Right ventricle myocardium inferior (tissue), 1 donor: ENCODE measurements at regions of chr7 and their contacts with region 1.

Region 1: DNA sequence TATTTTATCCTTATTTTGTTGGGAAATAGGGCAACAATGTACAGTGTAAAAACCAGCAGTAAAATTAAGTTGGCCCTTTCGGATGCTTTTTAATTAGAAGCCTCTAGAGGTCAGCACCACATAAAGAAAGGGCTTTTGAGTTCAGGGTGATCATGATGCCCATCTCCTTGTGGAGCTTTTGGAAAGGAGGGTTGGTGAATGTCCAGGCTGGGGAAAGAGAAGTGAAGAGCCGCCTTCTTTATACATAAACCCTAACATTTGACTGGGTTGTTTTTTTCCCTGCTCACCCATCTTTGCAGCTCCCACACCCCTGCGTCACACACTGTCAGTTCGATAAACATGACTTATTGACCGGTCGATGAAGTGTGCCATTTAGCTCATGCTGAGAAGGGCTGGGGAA is 29.8 kb downstream of the MTURN start:
- DNase-seq: no peak
- ATAC-seq: peak; percentile 64

Region 2: DNA sequence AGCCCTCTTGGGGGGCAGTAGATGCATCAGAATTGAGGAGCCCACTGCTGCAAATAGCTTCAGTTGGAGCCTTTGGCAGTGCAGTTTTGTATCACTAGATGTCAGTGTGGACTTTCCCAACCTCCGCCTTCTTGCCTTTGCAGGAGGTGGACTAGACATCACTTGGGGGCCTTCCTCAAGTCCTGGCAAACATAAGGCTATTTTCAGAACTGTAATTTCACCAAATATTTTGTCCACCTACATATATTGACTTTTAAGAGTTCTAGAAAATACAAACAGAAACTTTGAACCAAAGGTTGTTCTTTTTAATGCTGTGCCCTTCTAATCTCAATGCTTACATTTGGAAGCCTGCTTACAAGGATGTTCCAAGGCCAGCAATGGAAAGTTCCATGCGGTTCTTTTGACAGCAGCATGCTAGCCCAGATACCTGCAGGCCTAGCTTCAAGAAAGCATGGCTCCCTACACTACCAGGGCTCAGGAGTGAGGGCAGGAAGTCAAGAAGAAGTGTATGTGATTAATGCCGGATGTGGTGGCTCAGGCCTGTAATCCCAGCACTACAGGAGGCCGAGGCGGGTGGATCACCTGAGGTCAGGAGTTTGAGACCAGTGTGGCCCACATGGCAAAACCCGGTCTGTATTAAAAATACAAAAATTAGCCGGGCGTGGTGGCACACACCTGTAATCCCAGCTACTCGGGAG is 111.8 kb after region 1 on chr7:
- intact Hi-C with region 1: loop called (anchors 5 kb)
- DNase-seq: no peak
- ATAC-seq: peak; percentile 50

Region 3: DNA sequence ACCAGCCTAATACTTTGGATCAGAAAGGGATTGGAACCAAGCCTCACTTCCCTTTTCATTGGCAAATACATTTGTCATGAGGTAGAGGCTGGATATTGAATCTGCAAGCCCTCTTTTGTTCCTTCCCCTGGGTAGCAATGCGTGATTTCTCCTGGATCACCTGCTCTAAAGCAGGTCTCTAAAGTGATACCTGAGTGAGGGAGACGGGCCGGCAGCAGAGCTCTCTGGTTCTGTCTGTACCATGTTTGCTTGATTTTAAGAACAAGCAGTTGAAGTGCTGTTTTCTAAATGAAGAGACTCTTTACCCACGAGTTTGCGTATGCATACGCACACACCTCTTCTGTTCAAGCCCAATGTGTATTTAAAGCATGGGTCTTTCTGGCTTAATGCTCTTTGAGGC is 471.2 kb after region 1 on chr7:
- intact Hi-C with region 1: no loop called
- DNase-seq: no peak
- ATAC-seq: no peak